Gastrocnemius medialis (tissue), 4 donors: ENCODE measurements at regions of chr9 and their contacts with region 1.

Region 1: DNA sequence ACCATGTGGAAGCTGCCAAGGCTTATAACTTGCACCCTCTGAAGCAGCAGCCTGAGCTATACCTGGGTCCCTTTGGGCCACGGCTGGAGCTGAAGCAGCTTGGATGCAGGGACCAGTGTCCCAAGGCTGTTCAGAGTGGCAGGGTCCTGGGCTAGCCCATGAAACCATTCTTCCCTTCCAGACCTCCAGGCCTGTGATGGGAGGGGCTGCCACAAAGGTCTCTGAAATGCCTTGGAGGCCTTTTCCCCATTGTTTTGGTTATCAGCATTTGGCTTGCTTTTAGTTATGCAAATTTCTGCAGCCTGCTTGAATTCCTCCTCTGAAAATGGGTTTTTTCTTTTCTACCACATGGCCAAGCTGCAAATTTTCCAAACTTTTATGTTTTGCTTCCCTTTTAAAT is 433.7 kb upstream of the ACO1 start:
- DNase-seq: no peak
- ATAC-seq: no peak
- H3K4me3 ChIP-seq: no peak overlapping the region
- H3K27ac ChIP-seq: no peak overlapping the region
- H3K4me1 ChIP-seq: no peaks in the 10 kb centered on the region
- H3K27me3 ChIP-seq: no peaks in the 10 kb centered on the region
- CTCF ChIP-seq: no peak
- POLR2A ChIP-seq: no peak

Region 2: GRCh38 chr9:31868830-31869229 is 81.9 kb before region 1 on chr9:
- in situ Hi-C with region 1: loop called in 1 of 4 experiments (anchors 25 kb)
- intact Hi-C with region 1: no loop called
- DNase-seq: no peak
- ATAC-seq: no peak
- H3K4me3 ChIP-seq: no peak overlapping the region
- H3K27ac ChIP-seq: no peak overlapping the region
- H3K4me1 ChIP-seq: no peaks in the 10 kb centered on the region
- H3K27me3 ChIP-seq: no peaks in the 10 kb centered on the region
- CTCF ChIP-seq: no peak
- POLR2A ChIP-seq: no peak